Uterus (tissue), 4 donors: ENCODE measurements at regions of chr12 and their contacts with region 1.

Region 1: GRCh38 chr12:122471324-122472226 is 29.2 kb downstream of the ZCCHC8 start:
- DNase-seq: peak in 1 of 2 donors; percentile 18
- H3K4me3 ChIP-seq: no peak overlapping the region
- H3K27ac ChIP-seq: peak overlapping the region; percentile 64 to 86
- H3K4me1 ChIP-seq: peaks cover 0 to 9% of the 10 kb centered on the region in 2 donors
- H3K27me3 ChIP-seq: no peaks in the 10 kb centered on the region
- CTCF ChIP-seq: peak; percentile 71 to 88 (median 82)
- POLR2A ChIP-seq: no peak

Region 2: DNA sequence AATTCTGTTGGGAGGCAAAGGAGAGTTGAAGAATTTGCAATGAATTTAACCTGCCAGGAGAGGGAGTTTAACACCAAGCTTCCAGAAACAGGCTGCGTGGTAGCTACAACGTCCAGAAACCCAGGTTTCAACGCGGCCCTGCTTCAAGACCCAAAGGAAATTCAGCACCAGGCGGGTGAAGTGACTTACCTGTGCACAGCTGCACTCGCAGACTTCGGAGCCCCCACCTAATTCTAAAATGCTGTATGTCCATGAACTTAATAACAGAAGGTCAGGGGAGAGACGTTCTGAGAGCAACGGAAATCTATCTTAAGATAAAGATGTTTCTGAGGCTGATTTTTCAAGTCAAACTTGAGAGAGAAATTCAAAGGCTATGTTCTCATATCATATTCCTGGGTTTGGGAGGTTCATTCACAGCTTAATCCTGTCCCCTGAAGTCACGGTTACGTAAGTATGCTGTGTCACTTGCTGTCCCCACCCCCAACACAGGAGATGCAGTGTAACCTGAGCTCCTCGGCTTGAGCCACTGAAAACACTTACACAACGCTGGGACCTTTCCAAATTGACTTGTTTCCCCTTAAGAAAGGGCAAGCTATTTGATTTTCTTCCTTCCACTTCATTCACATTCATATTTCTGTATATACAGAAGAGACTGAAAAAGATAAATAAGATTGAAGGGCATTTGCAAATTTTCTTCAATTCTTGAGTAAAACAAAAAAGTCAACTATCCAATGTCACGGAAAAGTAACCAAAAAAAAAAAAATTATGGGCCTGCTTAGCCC is 71.8 kb before region 1 on chr12:
- intact Hi-C with region 1: loop called (anchors 10 kb)
- DNase-seq: peak; percentile 60 to 75
- H3K4me3 ChIP-seq: no peak overlapping the region
- H3K27ac ChIP-seq: peak overlapping the region; percentile 90 to 96
- H3K4me1 ChIP-seq: peaks cover 0 to 15% of the 10 kb centered on the region in 2 donors
- H3K27me3 ChIP-seq: no peaks in the 10 kb centered on the region
- CTCF ChIP-seq: peak; percentile 76 to 81 (median 79)
- POLR2A ChIP-seq: no peak